B cell (primary cell): ENCODE measurements at regions of chr5 and their contacts with region 1.

Region 1: GRCh38 chr5:32585446-32586275 is at the start of gene SUB1:
- DNase-seq: peak; percentile 94
- ATAC-seq: peak; percentile 64
- H3K4me3 ChIP-seq: peak within 1 kb of the TSS; percentile 83 to 93 (median 86)
- H3K4me3 Mint-ChIP-seq: peak within 1 kb of the TSS; percentile 96
- H3K27ac ChIP-seq: peak within 1 kb of the TSS; percentile 96 to 99
- H3K27ac Mint-ChIP-seq: peak within 1 kb of the TSS; percentile 97
- H3K4me1 ChIP-seq: peaks cover 68 to 76% of the 10 kb centered on the region in 2 donors
- H3K4me1 Mint-ChIP-seq: peaks cover 73% of the 10 kb centered on the region
- H3K27me3 ChIP-seq: no peaks in the 10 kb centered on the region
- H3K27me3 Mint-ChIP-seq: no peaks in the 10 kb centered on the region
- CTCF ChIP-seq: no peak
- total RNA-seq, gene SUB1: 117 and 123 TPM in 2 replicates

Region 2: GRCh38 chr5:31531888-31532710 is 1053.6 kb before region 1 on chr5 and contains the starts of genes C5orf22 and DROSHA:
- CTCF ChIA-PET with region 1: no interaction called
- POLR2A ChIA-PET with region 1: no interaction called
- intact Hi-C with region 1: loop called (anchors 5 kb)
- DNase-seq: peak; percentile 90
- ATAC-seq: peak; percentile 98
- H3K4me3 ChIP-seq: peak within 1 kb of the TSS; percentile 64 to 94 (median 91)
- H3K4me3 Mint-ChIP-seq: peak within 1 kb of the TSS; percentile 100
- H3K27ac ChIP-seq: peak within 1 kb of the TSS; percentile 29 to 70
- H3K27ac Mint-ChIP-seq: peak within 1 kb of the TSS; percentile 94
- H3K4me1 ChIP-seq: peaks cover 23% of the 10 kb centered on the region in 2 donors
- H3K4me1 Mint-ChIP-seq: peaks cover 38% of the 10 kb centered on the region
- H3K27me3 ChIP-seq: no peaks in the 10 kb centered on the region
- H3K27me3 Mint-ChIP-seq: no peaks in the 10 kb centered on the region
- CTCF ChIP-seq: no peak
- total RNA-seq, gene C5orf22: 28.2 and 28.9 TPM in 2 replicates
- total RNA-seq, gene DROSHA: 62.4 and 65.4 TPM in 2 replicates

Region 3: DNA sequence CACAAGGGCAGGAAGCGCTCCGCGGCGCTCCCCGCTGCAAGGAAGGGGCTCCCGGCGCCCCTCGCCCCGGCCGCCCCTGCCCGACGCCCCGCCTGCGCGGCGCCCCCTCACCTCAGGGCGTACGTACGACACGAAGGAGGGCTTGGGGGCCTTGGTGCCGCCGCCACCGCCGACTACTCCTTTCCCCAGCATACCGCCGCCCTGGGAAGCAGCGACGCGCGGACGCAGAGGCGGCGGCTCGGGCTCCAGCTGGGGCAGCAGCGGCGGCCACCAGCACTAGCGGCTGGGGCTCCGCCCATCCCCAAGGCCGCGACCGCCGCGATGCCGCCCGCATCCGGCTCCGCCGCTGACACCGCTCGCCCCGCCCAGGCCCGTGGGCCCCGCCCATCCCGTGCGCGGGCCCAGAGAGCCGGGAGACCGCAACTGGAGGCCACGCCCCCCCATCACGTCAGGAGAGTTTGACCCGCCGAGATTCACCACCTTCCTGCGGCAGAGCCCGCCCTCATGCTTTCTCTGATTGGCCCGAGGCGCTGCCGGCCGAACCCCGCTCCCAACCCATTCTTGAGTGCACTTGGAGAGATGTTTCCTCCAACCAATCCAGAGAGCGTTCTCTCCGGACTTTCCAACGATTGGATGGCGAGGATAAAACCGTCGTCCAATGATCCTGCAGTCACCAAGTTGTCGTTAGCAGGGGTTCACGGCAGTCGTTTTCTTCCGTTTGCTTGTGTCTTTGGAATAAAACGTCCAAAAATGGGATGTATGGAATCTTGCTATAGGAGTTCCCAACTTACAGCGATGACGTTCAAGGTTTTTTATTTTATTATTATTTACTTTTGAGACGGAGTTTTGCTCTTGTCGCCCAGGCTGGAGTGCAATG is 272.8 kb before region 1 on chr5 and contains the start of gene MTMR12:
- CTCF ChIA-PET with region 1: interaction called, 3 read pairs
- POLR2A ChIA-PET with region 1: no interaction called
- intact Hi-C with region 1: loop called (anchors 1 kb)
- DNase-seq: peak; percentile 100
- ATAC-seq: peak; percentile 88
- H3K4me3 ChIP-seq: peak within 1 kb of the TSS; percentile 75 to 96 (median 82)
- H3K4me3 Mint-ChIP-seq: peak within 1 kb of the TSS; percentile 88
- H3K27ac ChIP-seq: peak within 1 kb of the TSS; percentile 89 to 92
- H3K27ac Mint-ChIP-seq: peak within 1 kb of the TSS; percentile 95
- H3K4me1 ChIP-seq: peaks cover 31 to 43% of the 10 kb centered on the region in 2 donors
- H3K4me1 Mint-ChIP-seq: peaks cover 38% of the 10 kb centered on the region
- H3K27me3 ChIP-seq: no peaks in the 10 kb centered on the region
- H3K27me3 Mint-ChIP-seq: no peaks in the 10 kb centered on the region
- CTCF ChIP-seq: no peak
- total RNA-seq, gene MTMR12: 29.2 and 29.4 TPM in 2 replicates

Region 4: DNA sequence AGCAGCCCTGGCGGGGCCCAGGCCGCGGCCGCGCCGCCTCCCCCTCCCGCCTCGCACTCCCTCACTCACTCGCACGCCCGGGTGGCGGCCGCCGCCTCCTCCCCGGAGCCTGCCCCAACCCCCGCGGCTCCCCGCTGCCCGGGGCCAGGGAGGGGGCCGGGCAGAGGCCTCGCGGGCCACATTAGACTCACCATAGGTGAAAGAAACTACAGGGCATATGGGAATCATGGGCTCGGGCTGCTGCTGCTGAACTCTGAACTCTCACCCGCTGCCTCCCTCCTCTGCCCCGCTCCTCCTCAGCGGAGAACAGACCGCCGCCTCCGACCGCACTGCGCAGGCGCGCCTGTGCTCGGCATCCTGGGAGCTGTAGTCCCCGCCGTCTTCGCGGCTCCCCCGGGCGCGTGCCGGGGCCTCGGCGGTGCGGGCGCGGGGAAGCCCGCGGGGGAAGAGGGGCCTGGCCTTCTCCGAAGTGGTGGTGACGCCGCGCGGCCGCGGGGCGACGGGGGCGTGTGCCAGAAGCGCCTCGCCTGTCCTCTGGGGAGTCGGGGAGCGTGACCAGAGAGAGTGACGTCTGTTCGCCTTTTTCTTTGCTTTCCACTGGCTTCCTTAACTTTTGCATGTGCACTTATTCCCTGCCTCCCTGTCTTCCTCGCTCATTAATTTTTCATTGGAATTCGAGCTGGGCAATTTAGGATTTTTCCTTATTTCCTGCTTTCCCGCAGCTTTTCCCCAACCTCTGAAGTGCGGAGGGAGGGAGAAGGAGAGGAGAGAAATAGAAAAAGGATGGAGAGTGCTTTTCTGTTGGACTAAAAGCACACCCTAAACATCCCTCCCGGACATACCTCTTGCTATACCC is 141.0 kb before region 1 on chr5 and contains the start of gene ZFR:
- CTCF ChIA-PET with region 1: interaction called, 8 read pairs
- POLR2A ChIA-PET with region 1: interaction called, 8 read pairs
- intact Hi-C with region 1: loop called (anchors 1 kb)
- DNase-seq: peak; percentile 94
- ATAC-seq: peak; percentile 80
- H3K4me3 ChIP-seq: peak within 1 kb of the TSS; percentile 55 to 91 (median 76)
- H3K4me3 Mint-ChIP-seq: peak within 1 kb of the TSS; percentile 93
- H3K27ac ChIP-seq: peak within 1 kb of the TSS; percentile 88 to 92
- H3K27ac Mint-ChIP-seq: peak within 1 kb of the TSS; percentile 96
- H3K4me1 ChIP-seq: peaks cover 36 to 42% of the 10 kb centered on the region in 2 donors
- H3K4me1 Mint-ChIP-seq: peaks cover 59% of the 10 kb centered on the region
- H3K27me3 ChIP-seq: no peaks in the 10 kb centered on the region
- H3K27me3 Mint-ChIP-seq: no peaks in the 10 kb centered on the region
- CTCF ChIP-seq: no peak
- total RNA-seq, gene ZFR: 69.0 and 74.6 TPM in 2 replicates

Region 5: GRCh38 chr5:32498484-32498883 is 87.2 kb before region 1 on chr5:
- CTCF ChIA-PET with region 1: interaction called, 38 read pairs
- POLR2A ChIA-PET with region 1: no interaction called
- intact Hi-C with region 1: no loop called
- DNase-seq: no peak
- ATAC-seq: no peak
- H3K4me3 ChIP-seq: no peak overlapping the region
- H3K4me3 Mint-ChIP-seq: no peak overlapping the region
- H3K27ac ChIP-seq: no peak overlapping the region
- H3K27ac Mint-ChIP-seq: no peak overlapping the region
- H3K4me1 ChIP-seq: no peaks in the 10 kb centered on the region
- H3K4me1 Mint-ChIP-seq: peaks cover 2% of the 10 kb centered on the region
- H3K27me3 ChIP-seq: peaks cover 0 to 21% (median 9%) of the 10 kb centered on the region in 4 experiments
- H3K27me3 Mint-ChIP-seq: peaks cover 49% of the 10 kb centered on the region
- CTCF ChIP-seq: no peak

Region 6: DNA sequence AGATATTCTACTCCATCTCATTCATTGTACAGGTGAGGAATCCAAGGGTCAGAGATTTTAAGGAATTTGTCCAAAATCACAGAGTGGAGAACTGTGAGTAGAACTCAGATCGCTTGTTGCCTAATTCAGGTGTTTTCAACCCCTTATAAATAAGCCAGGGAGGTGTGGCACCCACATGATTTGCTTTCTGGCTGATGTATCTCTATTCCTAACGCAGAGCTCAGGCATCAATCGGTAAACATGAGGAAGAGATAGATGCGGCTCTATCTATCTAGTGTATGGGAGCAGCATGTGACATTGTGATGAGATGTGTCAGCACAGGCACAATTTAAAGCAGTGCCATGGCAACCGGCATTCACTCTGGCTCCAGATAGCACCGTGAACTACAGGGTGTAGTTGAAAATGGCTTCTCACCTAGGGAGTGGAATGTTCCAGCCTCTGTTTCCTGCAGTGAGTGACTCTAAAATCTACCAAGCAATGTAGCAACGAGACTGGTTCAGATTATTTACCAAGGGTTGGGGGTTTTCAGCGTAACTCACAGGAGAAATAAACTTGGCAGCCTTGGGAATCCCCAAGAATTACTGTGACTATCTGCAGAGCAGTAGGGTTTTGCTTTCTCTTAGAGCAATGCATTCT is 53.7 kb before region 1 on chr5:
- CTCF ChIA-PET with region 1: interaction called, 23 read pairs
- POLR2A ChIA-PET with region 1: interaction called, 4 read pairs
- intact Hi-C with region 1: loop called (anchors 2 kb)
- DNase-seq: peak; percentile 54
- ATAC-seq: peak; percentile 61
- H3K4me3 ChIP-seq: peak overlapping the region in 4 of 5 experiments; percentile 7 to 50 (median 32)
- H3K4me3 Mint-ChIP-seq: peak overlapping the region; percentile 77
- H3K27ac ChIP-seq: peak overlapping the region; percentile 59 to 64
- H3K27ac Mint-ChIP-seq: peak overlapping the region; percentile 42
- H3K4me1 ChIP-seq: peaks cover 8 to 30% of the 10 kb centered on the region in 2 donors
- H3K4me1 Mint-ChIP-seq: peaks cover 31% of the 10 kb centered on the region
- H3K27me3 ChIP-seq: peaks cover 0 to 4% (median 0%) of the 10 kb centered on the region in 4 experiments
- H3K27me3 Mint-ChIP-seq: no peaks in the 10 kb centered on the region
- CTCF ChIP-seq: no peak

Region 7: DNA sequence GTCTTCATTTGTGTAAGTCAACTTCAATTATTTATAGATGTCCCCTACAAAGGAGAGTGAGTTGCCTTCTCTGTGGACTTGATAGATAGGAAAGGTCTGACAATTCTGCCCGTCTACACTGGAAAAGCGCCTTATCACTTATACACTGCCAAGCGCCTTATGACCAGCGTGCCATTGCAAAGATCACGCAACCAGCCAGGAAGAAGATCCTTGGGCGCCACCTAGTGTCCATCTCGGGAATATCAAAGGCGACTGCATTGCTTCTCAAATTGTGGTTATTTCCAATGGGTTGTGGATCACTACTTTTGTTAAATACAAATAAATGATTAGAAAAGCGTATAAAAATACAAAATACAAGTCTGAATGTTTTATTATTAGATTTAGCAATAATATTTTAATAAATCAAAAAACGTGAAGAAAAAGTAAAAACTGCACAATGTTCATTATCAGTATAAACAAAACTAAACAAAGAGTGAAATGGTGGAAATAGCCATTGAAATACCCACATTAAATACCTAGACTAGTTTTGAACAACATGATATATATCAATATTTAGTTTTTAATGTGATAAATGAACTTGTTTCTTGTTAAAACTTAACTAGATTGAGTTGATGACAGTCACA is 27.5 kb after region 1 on chr5:
- CTCF ChIA-PET with region 1: interaction called, 24 read pairs
- POLR2A ChIA-PET with region 1: no interaction called
- intact Hi-C with region 1: no loop called
- DNase-seq: peak; percentile 81
- ATAC-seq: peak; percentile 77
- H3K4me3 ChIP-seq: no peak overlapping the region
- H3K4me3 Mint-ChIP-seq: no peak overlapping the region
- H3K27ac ChIP-seq: no peak overlapping the region
- H3K27ac Mint-ChIP-seq: peak overlapping the region; percentile 17
- H3K4me1 ChIP-seq: peaks cover 0 to 4% of the 10 kb centered on the region in 2 donors
- H3K4me1 Mint-ChIP-seq: peaks cover 3% of the 10 kb centered on the region
- H3K27me3 ChIP-seq: no peaks in the 10 kb centered on the region
- H3K27me3 Mint-ChIP-seq: no peaks in the 10 kb centered on the region
- CTCF ChIP-seq: peak; percentile 98

Region 8: GRCh38 chr5:33008751-33009418 is 423.2 kb after region 1 on chr5:
- CTCF ChIA-PET with region 1: no interaction called
- POLR2A ChIA-PET with region 1: no interaction called
- intact Hi-C with region 1: no loop called
- DNase-seq: no peak
- ATAC-seq: no peak
- H3K4me3 ChIP-seq: no peak overlapping the region
- H3K4me3 Mint-ChIP-seq: no peak overlapping the region
- H3K27ac ChIP-seq: no peak overlapping the region
- H3K27ac Mint-ChIP-seq: no peak overlapping the region
- H3K4me1 ChIP-seq: no peaks in the 10 kb centered on the region
- H3K4me1 Mint-ChIP-seq: no peaks in the 10 kb centered on the region
- H3K27me3 ChIP-seq: no peaks in the 10 kb centered on the region
- H3K27me3 Mint-ChIP-seq: no peaks in the 10 kb centered on the region
- CTCF ChIP-seq: no peak

Region 9: GRCh38 chr5:33170411-33170810 is 584.8 kb after region 1 on chr5:
- CTCF ChIA-PET with region 1: no interaction called
- POLR2A ChIA-PET with region 1: no interaction called
- intact Hi-C with region 1: no loop called
- DNase-seq: no peak
- ATAC-seq: no peak
- H3K4me3 ChIP-seq: no peak overlapping the region
- H3K4me3 Mint-ChIP-seq: no peak overlapping the region
- H3K27ac ChIP-seq: no peak overlapping the region
- H3K27ac Mint-ChIP-seq: no peak overlapping the region
- H3K4me1 ChIP-seq: no peaks in the 10 kb centered on the region
- H3K4me1 Mint-ChIP-seq: no peaks in the 10 kb centered on the region
- H3K27me3 ChIP-seq: no peaks in the 10 kb centered on the region
- H3K27me3 Mint-ChIP-seq: no peaks in the 10 kb centered on the region
- CTCF ChIP-seq: no peak